ENCODE measurements at regions of chr6 and their contacts with region 1.

Region 1: GRCh38 chr6:42984001-42984923 is at the start of gene PPP2R5D:
- DNase-seq: peak; percentile 92 to 99 (median 98)
- ATAC-seq: peak; percentile 91 to 95 (median 92)
- H3K4me3 ChIP-seq: peak within 1 kb of the TSS; percentile 74 to 79
- H3K4me3 Mint-ChIP-seq: peak within 1 kb of the TSS; percentile 89 to 95 (median 92)
- H3K27ac ChIP-seq: peak within 1 kb of the TSS; percentile 87
- H3K27ac Mint-ChIP-seq: peak within 1 kb of the TSS; percentile 94 to 96
- H3K4me1 ChIP-seq: peaks cover 14 to 48% of the 10 kb centered on the region in 2 experiments
- H3K4me1 Mint-ChIP-seq: peaks cover 54 to 68% (median 66%) of the 10 kb centered on the region in 3 donors
- H3K27me3 ChIP-seq: no peaks in the 10 kb centered on the region
- H3K27me3 Mint-ChIP-seq: no peaks in the 10 kb centered on the region
- total RNA-seq, gene PPP2R5D: 27.8 to 35.1 (median 33.3) TPM

Region 2: GRCh38 chr6:42909835-42910234 is 74.4 kb before region 1 on chr6:
- CTCF ChIA-PET with region 1: interaction called in 1 of 2 experiments, 10 read pairs
- POLR2A ChIA-PET with region 1: no interaction called
- DNase-seq: no peak
- ATAC-seq: no peak
- H3K4me3 ChIP-seq: no peak overlapping the region
- H3K4me3 Mint-ChIP-seq: no peak overlapping the region
- H3K27ac ChIP-seq: no peak overlapping the region
- H3K27ac Mint-ChIP-seq: no peak overlapping the region
- H3K4me1 ChIP-seq: peaks cover 5 to 8% of the 10 kb centered on the region in 2 experiments
- H3K4me1 Mint-ChIP-seq: peaks cover 0 to 4% (median 3%) of the 10 kb centered on the region in 3 donors
- H3K27me3 ChIP-seq: peaks cover 0 to 33% of the 10 kb centered on the region in 2 experiments
- H3K27me3 Mint-ChIP-seq: peaks cover 4 to 16% of the 10 kb centered on the region in 2 donors

Measured in T-cell (primary cell).